H1 (cell line): ENCODE measurements at regions of chr4 and their contacts with region 1.

Region 1: GRCh38 chr4:8050555-8051206 is 107.9 kb downstream of the ABLIM2 start:
- DNase-seq: peak; percentile 65 to 70
- H3K4me3 ChIP-seq: no peak overlapping the region; a peak in 1 of 8 replicates
- H3K27ac ChIP-seq: peak overlapping the region; percentile 86
- H3K4me1 ChIP-seq: peaks cover 6 to 36% (median 28%) of the 10 kb centered on the region in 4 experiments
- H3K27me3 ChIP-seq: no peaks in the 10 kb centered on the region
- CTCF ChIP-seq: peak in 1 of 3 experiments; percentile 1; a peak in 1 of 4 replicates
- EP300 ChIP-seq: peak in 1 of 2 experiments; percentile 57; a peak in 1 of 3 replicates
- POLR2A ChIP-seq: peak in 1 of 2 experiments; percentile 76; a peak in 2 of 3 replicates
- RAD21 ChIP-seq: no peak

Region 2: GRCh38 chr4:7831330-7831729 is 219.4 kb before region 1 on chr4:
- CTCF ChIA-PET with region 1: no interaction called
- POLR2A ChIA-PET with region 1: no interaction called
- DNase-seq: no peak
- H3K4me3 ChIP-seq: no peak overlapping the region
- H3K27ac ChIP-seq: no peak overlapping the region
- H3K4me1 ChIP-seq: peaks cover 0 to 9% (median 5%) of the 10 kb centered on the region in 4 experiments; a peak in 4 of 7 replicates
- H3K27me3 ChIP-seq: no peaks in the 10 kb centered on the region
- CTCF ChIP-seq: no peak
- EP300 ChIP-seq: no peak
- POLR2A ChIP-seq: no peak
- RAD21 ChIP-seq: no peak

Region 3: GRCh38 chr4:8039290-8039689 is 11.4 kb before region 1 on chr4:
- CTCF ChIA-PET with region 1: interaction called, 15 read pairs
- POLR2A ChIA-PET with region 1: interaction called, 8 read pairs
- DNase-seq: no peak
- H3K4me3 ChIP-seq: no peak overlapping the region
- H3K27ac ChIP-seq: no peak overlapping the region
- H3K4me1 ChIP-seq: peaks cover 0 to 7% (median 1%) of the 10 kb centered on the region in 4 experiments; a peak in 2 of 7 replicates
- H3K27me3 ChIP-seq: no peaks in the 10 kb centered on the region
- CTCF ChIP-seq: no peak
- EP300 ChIP-seq: no peak
- POLR2A ChIP-seq: no peak
- RAD21 ChIP-seq: no peak

Region 4: DNA sequence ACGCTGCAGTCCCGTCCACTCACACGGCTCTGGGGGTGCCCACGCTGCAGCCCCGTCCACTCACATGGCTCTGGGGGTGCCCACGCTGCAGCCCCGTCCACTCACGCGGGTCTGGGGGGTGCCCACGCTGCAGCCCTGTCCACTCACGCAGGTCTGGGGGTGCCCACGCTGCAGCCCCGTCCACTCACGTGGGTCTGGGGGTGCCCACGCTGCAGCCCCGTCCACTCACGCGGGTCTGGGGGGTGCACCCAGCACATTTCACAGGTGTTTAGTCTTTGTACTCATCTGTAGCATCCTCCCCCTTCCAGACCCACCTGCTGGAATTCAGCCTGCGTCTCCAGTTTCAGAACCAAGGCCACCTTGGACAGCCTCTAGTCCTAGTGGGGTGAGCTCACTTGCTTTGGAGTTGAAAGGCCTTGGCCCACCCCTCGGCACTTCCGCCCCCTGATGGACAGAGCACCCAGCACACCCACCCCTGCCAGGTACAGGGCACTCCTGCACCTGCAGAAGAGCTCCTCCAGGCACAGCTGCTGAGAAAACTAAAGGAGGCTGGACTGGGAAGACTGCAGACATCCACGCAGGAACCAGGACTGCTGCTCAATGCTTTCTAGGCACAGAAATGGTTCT is 34.9 kb after region 1 on chr4:
- CTCF ChIA-PET with region 1: interaction called, 17 read pairs
- POLR2A ChIA-PET with region 1: interaction called, 3 read pairs
- DNase-seq: no peak
- H3K4me3 ChIP-seq: no peak overlapping the region
- H3K27ac ChIP-seq: no peak overlapping the region
- H3K4me1 ChIP-seq: peaks cover 1 to 6% (median 4%) of the 10 kb centered on the region in 4 experiments; a peak in 6 of 7 replicates
- H3K27me3 ChIP-seq: no peaks in the 10 kb centered on the region
- CTCF ChIP-seq: peak in 2 of 3 experiments; percentile 47 to 62; a peak in 3 of 4 replicates
- EP300 ChIP-seq: no peak
- POLR2A ChIP-seq: no peak
- RAD21 ChIP-seq: peak; percentile 31 to 55